Tibial artery (tissue), 4 donors: ENCODE measurements at regions of chr18 and their contacts with region 1.

Region 1: DNA sequence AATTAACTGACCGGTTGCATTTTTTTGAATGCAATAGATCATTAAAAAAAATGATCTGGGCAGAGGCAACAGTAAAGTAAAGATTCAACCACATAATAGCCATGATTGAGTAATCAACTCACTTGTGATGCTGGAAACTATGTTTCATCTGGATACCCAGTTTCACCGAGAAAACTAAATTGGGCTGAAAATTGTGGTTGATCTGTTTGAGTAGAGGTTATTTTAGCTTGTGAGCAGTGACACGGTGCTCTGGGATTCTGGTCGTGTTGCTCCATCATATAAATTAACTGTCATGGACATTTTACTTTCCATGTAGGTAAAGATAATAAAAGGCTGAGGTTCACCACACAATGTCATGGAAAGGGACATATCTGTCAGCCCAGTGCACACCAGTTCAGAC is 58.7 kb downstream of the CD226 start:
- DNase-seq: no peak
- H3K4me3 ChIP-seq: no peak overlapping the region
- H3K27ac ChIP-seq: no peak overlapping the region
- H3K4me1 ChIP-seq: no peaks in the 10 kb centered on the region
- H3K27me3 ChIP-seq: no peaks in the 10 kb centered on the region
- CTCF ChIP-seq: no peak

Region 2: GRCh38 chr18:69291044-69291443 is 598.0 kb before region 1 on chr18:
- intact Hi-C with region 1: loop called (anchors 2 kb)
- DNase-seq: no peak
- H3K4me3 ChIP-seq: no peak overlapping the region
- H3K27ac ChIP-seq: no peak overlapping the region
- H3K4me1 ChIP-seq: no peaks in the 10 kb centered on the region
- H3K27me3 ChIP-seq: no peaks in the 10 kb centered on the region
- CTCF ChIP-seq: no peak